ENCODE measurements at regions of chr2 and their contacts with region 1.

Region 1: DNA sequence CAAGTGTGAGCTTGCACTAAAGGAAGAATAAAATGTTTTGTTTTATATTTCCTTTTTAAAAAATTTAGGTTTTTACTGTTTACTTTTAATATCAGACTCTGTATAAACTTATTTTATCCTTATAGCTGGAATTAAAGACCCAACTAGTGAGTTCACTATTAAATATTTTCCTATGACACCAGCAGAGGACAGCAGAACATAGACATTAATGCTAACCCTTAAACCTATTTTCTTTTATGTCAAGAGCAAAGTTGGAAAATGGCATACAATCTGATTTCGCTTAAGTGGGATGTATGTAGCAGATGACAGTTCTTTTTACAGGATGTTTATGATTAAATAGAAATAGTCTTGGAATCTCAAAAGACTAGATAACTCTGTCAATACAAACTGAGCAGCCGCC is 188.2 kb upstream of the XIRP2 start:
- DNase-seq: peak; percentile 52
- ATAC-seq: peak; percentile 62; the same call in 1 of the 2 replicates
- H3K4me3 ChIP-seq: no peak overlapping the region
- H3K27ac ChIP-seq: no peak overlapping the region
- H3K4me1 ChIP-seq: no peaks in the 10 kb centered on the region
- H3K27me3 ChIP-seq: no peaks in the 10 kb centered on the region
- CTCF ChIP-seq: peak; percentile 75
- POLR2A ChIP-seq: no peak
- RAD21 ChIP-seq: peak; percentile 82

Region 2: DNA sequence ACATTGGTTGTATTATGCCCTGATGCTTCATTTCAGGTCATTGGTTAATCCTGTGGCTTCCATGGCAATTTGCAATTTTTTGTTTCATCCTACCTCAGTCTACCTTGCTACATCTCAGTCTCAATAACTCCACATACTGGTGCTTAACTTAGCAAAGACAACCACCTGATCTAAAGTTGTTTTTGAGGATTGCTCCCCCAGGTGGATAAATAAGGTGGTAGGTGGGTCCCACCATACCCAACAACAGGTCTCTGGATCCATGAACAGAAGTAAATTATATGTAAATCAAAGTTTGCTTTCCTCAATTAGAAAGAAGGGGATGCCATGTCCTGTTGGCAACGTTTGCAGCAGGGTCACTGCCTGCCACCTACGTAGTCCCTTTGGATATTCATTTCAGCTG is 195.2 kb after region 1 on chr2:
- CTCF ChIA-PET with region 1: no interaction called
- POLR2A ChIA-PET with region 1: no interaction called
- dilution Hi-C with region 1: no loop called
- in situ Hi-C with region 1: no loop called
- intact Hi-C with region 1: no loop called
- DNase-seq: no peak
- ATAC-seq: no peak
- H3K4me3 ChIP-seq: no peak overlapping the region
- H3K27ac ChIP-seq: no peak overlapping the region
- H3K4me1 ChIP-seq: peaks cover 2% of the 10 kb centered on the region; the same call in 1 of the 2 replicates
- H3K27me3 ChIP-seq: no peaks in the 10 kb centered on the region
- CTCF ChIP-seq: no peak
- POLR2A ChIP-seq: no peak
- RAD21 ChIP-seq: no peak

Region 3: GRCh38 chr2:167052825-167053224 is 352.7 kb after region 1 on chr2:
- CTCF ChIA-PET with region 1: no interaction called
- POLR2A ChIA-PET with region 1: no interaction called
- dilution Hi-C with region 1: no loop called
- in situ Hi-C with region 1: no loop called
- intact Hi-C with region 1: loop called (anchors 10 kb)
- DNase-seq: peak; percentile 84
- ATAC-seq: peak; percentile 95
- H3K4me3 ChIP-seq: no peak overlapping the region
- H3K27ac ChIP-seq: no peak overlapping the region
- H3K4me1 ChIP-seq: peaks cover 2% of the 10 kb centered on the region; the same call in 1 of the 2 replicates
- H3K27me3 ChIP-seq: no peaks in the 10 kb centered on the region
- CTCF ChIP-seq: no peak
- POLR2A ChIP-seq: no peak
- RAD21 ChIP-seq: no peak

Region 4: GRCh38 chr2:167550448-167550847 is 850.4 kb after region 1 on chr2:
- CTCF ChIA-PET with region 1: no interaction called
- POLR2A ChIA-PET with region 1: no interaction called
- dilution Hi-C with region 1: no loop called
- in situ Hi-C with region 1: no loop called
- intact Hi-C with region 1: loop called (anchors 5 kb)
- DNase-seq: peak; percentile 27
- ATAC-seq: 0 out of 2 replicates have a peak, but pooled peaks have one; percentile 40
- H3K4me3 ChIP-seq: no peak overlapping the region
- H3K27ac ChIP-seq: no peak overlapping the region
- H3K4me1 ChIP-seq: no peaks in the 10 kb centered on the region; the same call in 1 of the 2 replicates
- H3K27me3 ChIP-seq: no peaks in the 10 kb centered on the region
- CTCF ChIP-seq: peak; percentile 42; the same call in 1 of the 2 replicates
- POLR2A ChIP-seq: no peak
- RAD21 ChIP-seq: peak; percentile 39